ENCODE measurements at regions of chr6 and their contacts with region 1.

Region 1: DNA sequence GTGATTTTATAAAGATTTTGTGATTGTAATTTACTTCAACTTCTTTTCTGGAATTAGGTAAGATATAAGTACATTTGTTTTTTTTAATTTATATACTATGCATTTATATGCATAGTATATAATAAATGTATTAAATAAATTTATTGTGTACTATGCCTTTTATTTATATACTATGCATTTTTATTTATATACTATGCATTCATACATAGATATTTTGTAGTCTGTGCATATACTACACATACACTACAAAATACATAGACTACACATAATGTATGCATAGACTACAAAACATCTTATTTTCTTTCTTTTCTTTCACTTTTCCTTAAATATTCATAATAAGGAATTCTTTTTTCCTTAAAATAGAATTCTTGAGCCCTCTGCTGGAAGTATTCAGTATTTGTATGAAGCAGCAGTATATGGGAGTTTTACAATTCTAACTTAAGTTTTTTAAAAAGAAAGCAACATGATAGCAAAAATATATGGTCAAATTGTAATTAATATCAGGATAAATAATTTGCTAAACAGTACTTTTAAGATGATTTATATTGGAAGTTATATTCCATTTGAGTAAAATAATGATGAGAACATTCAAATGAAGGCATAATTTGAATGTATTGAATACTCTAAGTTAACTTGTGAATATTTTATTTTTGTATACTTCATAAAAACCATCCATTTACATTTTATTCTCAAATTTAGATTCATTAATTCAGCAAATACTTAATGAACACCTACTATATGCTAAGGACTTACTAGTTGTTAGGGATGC is 129.3 kb downstream of the KLHL32 start:
- ATAC-seq: no peak
- H3K4me3 ChIP-seq: no peak overlapping the region
- H3K27ac ChIP-seq: no peak overlapping the region
- H3K4me1 ChIP-seq: peaks cover 12% of the 10 kb centered on the region in 2 donors

Region 2: GRCh38 chr6:96844530-96844929 is 209.3 kb before region 1 on chr6:
- in situ Hi-C with region 1: no loop called
- ATAC-seq: no peak
- H3K4me3 ChIP-seq: no peak overlapping the region
- H3K27ac ChIP-seq: no peak overlapping the region
- H3K4me1 ChIP-seq: no peaks in the 10 kb centered on the region

Region 3: DNA sequence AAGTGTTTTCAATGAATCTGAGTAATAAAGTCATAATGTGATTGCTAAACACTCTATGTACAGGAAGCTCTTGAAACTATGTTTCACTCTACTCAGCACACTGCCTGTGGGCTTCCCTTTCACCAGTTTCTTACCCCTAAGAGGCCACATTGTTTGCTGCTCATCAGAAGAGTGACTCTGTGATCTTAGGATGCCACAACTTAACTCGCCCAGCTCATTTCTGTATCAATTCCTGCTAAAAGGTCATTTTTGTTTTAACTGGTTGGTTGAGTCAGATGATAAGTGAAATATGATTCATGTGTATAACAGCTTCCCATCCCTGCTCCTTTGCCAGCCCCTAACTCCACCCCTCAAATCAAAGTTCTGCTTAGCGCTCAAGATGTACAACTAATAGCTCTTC is 146.3 kb before region 1 on chr6:
- in situ Hi-C with region 1: loop called in 7 of 9 experiments (anchors 5 to 25 kb)
- ATAC-seq: no peak
- H3K4me3 ChIP-seq: no peak overlapping the region
- H3K27ac ChIP-seq: no peak overlapping the region
- H3K4me1 ChIP-seq: no peaks in the 10 kb centered on the region

Region 4: DNA sequence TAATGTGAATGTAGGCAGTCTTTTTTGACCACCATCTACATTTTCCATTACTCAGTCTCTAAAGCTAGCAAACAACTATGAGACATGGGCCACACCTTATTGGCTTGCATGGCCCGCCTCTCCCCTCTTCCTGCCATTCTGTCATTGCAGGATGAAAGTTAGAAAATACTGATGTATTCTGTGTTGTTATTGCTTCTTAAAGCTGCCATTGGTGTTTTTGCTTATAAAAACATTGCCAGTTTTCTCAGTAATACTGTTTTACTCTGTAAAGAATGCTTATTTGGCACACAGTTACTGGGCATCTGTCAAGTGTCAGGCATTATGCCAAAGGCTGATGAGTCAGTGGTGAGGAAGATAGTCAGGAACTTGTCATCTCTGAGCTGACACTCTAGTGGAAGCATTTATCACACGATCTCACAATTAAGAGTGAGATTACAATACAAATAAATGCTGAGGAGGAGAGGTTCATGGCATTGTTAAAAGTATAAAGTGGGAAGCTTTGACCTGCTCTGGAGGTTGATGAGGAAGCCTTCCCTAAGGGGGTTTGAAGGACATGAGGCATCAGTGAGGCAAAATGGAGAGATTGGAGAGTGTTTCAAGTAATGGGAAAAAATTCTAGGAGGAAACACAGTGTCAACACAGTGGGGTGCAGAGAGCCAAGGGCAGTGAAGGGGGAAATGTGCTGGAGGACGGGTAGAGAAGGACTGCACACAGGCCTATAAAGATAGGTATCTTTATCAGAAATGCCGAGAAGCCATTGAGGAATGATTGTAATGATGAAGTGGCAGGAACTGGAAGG is 114.6 kb before region 1 on chr6:
- in situ Hi-C with region 1: loop called in 1 of 9 experiments (anchors 25 kb)
- ATAC-seq: peak in 6 of 8 experiments; percentile 23 to 95 (median 70)
- H3K4me3 ChIP-seq: no peak overlapping the region
- H3K27ac ChIP-seq: no peak overlapping the region
- H3K4me1 ChIP-seq: peaks cover 0 to 25% of the 10 kb centered on the region in 2 donors

Measured in motor neuron (in vitro differentiated cells).